Activated CD4-positive, alpha-beta memory T cell treated with anti-CD3 and anti-CD28 coated beads for 36 hours (primary cell): ENCODE measurements at regions of chr5 and their contacts with region 1.

Region 1: DNA sequence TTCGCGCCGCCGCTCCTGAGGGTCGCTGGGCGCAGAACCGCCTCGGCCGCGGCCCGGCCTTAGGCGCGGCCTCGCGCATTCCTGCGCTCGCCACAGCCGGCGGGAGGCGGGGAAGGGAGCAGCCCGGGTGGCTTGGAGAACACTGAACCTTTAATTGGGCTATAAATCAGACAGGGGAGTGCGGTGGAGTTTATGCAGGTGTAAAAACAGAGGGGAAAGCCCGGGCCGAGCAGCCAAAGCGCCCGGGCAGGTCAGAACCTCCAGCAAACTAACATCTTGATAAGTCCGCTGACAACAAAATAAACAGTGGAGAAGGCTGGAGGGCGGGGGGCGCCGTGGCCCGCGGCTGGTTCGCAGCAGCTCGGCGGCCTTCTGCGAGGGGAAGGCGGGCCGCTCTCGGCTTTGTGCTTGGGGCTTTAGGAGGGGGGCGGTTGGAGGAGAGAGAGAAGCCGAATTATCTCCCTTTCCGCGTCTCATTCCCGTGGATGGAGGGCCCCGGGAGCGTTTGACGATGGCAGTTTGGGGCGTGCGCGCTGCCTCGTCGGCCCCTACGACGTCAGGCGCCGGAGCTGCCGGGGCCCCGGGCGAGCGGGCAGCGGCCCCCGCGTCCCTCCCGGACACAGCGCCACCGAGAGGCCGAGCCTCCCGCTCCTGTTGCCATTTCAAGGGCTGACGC is 11.3 kb downstream of the FOXD1 start:
- DNase-seq: peak; percentile 22
- H3K4me3 Mint-ChIP-seq: peak overlapping the region; percentile 51
- H3K27ac Mint-ChIP-seq: no peak overlapping the region
- H3K4me1 Mint-ChIP-seq: peaks cover 14% of the 10 kb centered on the region
- H3K27me3 Mint-ChIP-seq: peaks cover 77% of the 10 kb centered on the region

Region 2: GRCh38 chr5:73419465-73420390 is 17.5 kb before region 1 on chr5:
- CTCF ChIA-PET with region 1: no interaction called
- POLR2A ChIA-PET with region 1: no interaction called
- intact Hi-C with region 1: loop called (anchors 2 kb)
- DNase-seq: no peak
- H3K4me3 Mint-ChIP-seq: no peak overlapping the region
- H3K27ac Mint-ChIP-seq: no peak overlapping the region
- H3K4me1 Mint-ChIP-seq: peaks cover 11% of the 10 kb centered on the region
- H3K27me3 Mint-ChIP-seq: peaks cover 80% of the 10 kb centered on the region